PC-3 (cell line): ENCODE measurements at regions of chr3 and their contacts with region 1.

Region 1: GRCh38 chr3:129665024-129665768 is 58.7 kb upstream of the PLXND1 start:
- DNase-seq: peak; percentile 76
- ATAC-seq: peak; percentile 52
- H3K4me3 ChIP-seq: peak overlapping the region; percentile 15; the same call in 1 of the 2 replicates
- H3K27ac ChIP-seq: peak overlapping the region; percentile 97
- H3K4me1 ChIP-seq: peaks cover 53% of the 10 kb centered on the region
- H3K27me3 ChIP-seq: no peaks in the 10 kb centered on the region
- CTCF ChIP-seq: no peak

Region 2: DNA sequence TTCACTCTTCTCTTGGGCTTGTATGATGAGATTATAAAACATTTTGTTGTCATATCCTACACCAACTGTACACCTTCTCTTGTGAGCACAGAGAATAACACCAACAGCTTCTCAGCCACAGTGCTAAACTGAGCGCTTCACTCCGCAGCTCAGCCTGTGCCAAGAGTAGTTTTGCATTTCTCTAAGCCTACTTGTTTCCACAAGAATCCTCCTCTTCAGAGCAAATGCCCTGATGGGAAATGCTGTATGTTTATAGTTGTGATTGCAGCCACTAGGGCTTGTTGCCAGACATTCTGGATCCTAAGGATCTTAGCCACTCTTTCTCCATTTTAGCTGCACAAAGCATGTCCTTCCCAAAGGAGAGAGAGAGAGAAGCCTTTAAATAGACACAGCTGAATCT is 80.1 kb after region 1 on chr3:
- CTCF ChIA-PET with region 1: no interaction called
- POLR2A ChIA-PET with region 1: interaction called, 10 read pairs
- intact Hi-C with region 1: no loop called
- DNase-seq: no peak
- ATAC-seq: no peak
- H3K4me3 ChIP-seq: no peak overlapping the region
- H3K27ac ChIP-seq: no peak overlapping the region
- H3K4me1 ChIP-seq: no peaks in the 10 kb centered on the region
- H3K27me3 ChIP-seq: no peaks in the 10 kb centered on the region
- CTCF ChIP-seq: no peak